ENCODE measurements at regions of chr7 and their contacts with region 1.

Region 1: DNA sequence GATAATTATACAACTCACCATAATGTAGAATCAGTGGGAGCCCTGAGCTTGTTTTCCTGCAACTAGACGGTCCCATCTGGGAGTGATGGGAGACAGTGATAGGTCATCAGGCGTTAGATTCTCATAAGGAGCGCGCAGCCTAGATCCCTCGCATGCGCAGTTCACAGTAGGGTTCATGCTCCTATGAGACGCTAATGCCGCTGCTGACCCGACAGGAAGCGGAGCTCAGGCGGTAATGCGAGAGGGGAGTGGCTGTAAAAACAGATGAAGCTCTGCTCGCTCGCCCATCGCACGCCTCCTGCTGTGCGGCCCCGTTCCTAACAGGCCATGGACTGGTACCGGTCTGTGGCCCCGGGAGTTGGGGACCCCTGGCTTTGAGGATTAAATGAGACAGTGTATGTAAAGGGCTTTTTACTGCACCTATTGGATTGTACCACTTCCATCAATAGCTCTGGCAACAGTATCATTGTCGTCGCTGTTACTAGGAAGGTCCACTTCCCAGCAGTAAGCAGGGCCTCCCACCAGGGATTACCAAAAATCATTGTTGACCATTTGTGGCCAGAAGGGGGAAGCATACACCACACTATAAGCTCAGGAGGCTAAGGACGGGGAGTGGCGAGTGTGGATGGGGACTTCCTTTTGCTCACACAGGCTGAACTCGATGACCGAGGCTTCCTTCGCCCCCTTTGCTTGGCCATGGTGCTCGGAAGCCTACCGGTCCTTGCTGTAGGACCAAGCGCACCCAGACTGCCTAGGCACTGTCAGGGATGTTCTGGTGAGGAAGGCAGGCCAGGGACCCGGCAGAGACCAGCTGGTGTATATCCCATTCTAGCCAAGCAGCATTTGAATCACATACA is 26.4 kb downstream of the AKR1B1 start:
- DNase-seq: peak; percentile 91
- ATAC-seq: peak; percentile 98

Region 2: GRCh38 chr7:134514663-134515062 is 82.1 kb after region 1 on chr7:
- intact Hi-C with region 1: loop called (anchors 1 to 5 kb)
- DNase-seq: no peak
- ATAC-seq: peak; percentile 53 to 70

Region 3: DNA sequence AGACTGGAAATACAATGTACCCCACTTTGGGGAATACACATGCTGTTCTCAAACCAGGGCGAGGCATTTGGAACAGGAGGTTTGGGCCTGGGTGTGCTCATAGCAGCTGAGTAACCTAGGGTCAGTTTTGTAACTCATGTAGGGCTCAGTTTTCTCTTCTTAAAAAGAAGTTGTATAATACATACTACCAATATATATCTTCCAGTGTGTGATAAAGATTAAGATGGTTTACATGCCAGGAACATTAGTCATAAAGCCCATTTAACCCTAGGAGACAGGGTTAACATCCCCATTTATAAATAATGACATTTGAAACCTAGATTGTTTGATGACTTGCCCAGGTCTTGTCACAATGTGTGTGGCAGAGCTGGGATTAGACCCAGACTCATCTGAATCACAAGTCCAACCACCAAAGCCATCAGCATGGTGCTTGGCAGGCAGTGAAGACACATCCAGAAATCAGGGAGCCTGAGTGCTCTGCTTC is 100.8 kb after region 1 on chr7:
- intact Hi-C with region 1: no loop called
- DNase-seq: no peak
- ATAC-seq: no peak

Region 4: DNA sequence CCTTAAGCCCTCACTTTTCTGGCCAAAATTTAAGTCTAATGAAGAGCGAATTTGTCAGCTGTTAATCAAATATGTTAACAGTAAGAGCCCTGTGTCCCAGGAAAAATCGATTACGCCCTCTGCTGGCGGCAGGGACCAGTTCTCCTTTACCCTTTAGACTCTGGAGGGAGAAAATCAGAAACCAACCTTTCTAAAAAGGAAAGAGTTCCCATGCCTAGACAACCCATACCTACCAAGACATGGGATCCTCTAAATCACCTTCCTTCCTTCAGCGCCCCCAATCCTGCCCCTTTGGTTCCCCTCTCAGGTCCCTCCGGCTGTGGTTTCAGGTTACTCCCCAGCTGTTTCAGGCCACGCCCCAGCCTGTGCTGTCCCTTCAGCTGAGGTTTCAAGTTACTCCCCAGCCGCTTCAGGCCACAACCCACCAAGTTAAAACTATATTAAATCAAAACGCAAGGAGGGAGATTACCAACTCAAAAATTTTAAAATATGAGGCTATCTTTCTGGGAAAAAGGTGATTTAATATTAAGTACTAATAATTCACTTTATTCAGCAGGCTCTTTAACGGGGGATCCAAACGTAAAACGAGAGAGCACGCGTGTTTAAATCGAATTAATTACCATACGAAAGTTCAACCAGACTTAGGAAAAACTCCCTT is 115.0 kb after region 1 on chr7:
- intact Hi-C with region 1: loop called in 1 of 2 experiments (anchors 2 kb)
- DNase-seq: peak; percentile 80
- ATAC-seq: peak; percentile 94 to 95

Region 5: DNA sequence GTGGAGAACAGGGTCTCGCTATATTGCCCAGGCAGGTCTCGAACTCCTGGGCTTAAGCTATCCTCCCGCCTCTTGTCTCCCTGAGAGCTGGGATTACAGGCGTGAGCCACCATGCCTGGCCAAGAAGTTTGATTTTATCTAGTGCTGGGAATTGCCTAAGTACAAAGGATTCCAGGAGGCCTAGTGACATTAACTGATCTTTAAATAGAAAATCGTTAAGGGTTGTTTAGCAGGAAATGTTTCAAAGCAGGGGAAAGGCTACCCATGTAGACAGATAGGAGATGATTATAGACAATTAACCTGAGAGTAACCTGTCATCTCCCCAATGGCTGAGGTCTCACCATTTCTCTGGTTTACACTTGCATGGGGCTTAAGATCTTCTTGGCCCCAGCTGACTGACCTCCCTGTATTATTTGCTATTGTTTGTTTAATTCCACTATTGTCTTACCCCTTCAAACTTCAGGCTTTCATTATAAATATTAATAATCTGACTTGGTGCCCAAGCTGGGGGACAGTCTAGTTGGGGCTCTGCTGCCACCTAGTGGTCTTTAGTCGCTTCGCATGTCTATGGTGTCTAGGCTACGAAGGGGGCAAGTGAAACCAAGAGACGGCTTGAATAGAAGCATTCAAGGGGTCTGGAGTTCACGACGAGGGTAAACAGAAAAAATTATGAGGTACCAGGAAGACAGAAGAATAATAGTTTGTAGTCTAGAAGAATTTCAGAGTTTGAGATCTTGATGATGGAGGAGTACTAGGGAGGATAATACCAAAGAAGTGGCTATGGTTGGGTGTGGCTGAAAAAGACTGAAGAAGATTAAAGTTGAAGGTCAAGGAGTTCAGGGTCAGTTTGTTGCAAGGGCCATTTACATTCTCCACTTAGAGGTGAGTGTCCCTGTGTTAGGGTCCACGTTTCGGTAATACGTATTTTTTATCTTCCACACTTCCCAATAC is 173.7 kb after region 1 on chr7:
- intact Hi-C with region 1: loop called (anchors 2 to 5 kb)
- DNase-seq: peak; percentile 60
- ATAC-seq: peak; percentile 90 to 91

Region 6: GRCh38 chr7:134613623-134614347 is 181.3 kb after region 1 on chr7:
- intact Hi-C with region 1: loop called in 1 of 2 experiments (anchors 5 kb)
- DNase-seq: no peak
- ATAC-seq: peak; percentile 84 to 92